Spleen (tissue), 13 donors: ENCODE measurements at regions of chr20 and their contacts with region 1.

Region 1: DNA sequence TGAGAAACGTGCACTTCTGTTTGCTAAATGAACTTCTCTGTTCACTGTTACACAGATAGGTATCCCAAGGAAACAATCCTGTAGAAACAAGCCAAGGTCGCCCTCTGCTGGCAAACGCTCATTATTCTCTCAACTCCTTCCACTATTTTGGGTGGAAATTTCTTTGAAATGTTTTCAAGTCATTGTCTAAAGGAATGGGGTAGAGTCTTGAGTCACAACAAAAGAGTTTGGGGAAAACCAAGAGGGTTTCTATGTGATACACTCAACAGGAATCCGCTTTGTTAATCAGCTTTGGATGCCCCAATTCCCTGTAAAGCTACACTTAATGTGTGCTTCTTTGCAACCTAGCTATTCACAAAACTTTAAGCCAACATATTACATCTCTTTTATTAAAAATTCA is 4.6 kb upstream of the RAE1 start:
- DNase-seq: peak; percentile 81
- H3K4me3 ChIP-seq: no peak overlapping the region
- H3K27ac ChIP-seq: no peak overlapping the region
- H3K4me1 ChIP-seq: peaks cover 0 to 7% (median 1%) of the 10 kb centered on the region in 6 donors
- H3K27me3 ChIP-seq: peaks cover 0 to 25% (median 0%) of the 10 kb centered on the region in 7 donors
- CTCF ChIP-seq: peak; percentile 11 to 77 (median 63)
- POLR2A ChIP-seq: no peak

Region 2: GRCh38 chr20:57089691-57090150 is 256.8 kb before region 1 on chr20:
- intact Hi-C with region 1: loop called (anchors 5 kb)
- DNase-seq: peak; percentile 86
- H3K4me3 ChIP-seq: no peak overlapping the region
- H3K27ac ChIP-seq: no peak overlapping the region
- H3K4me1 ChIP-seq: peaks cover 0 to 9% (median 4%) of the 10 kb centered on the region in 6 donors
- H3K27me3 ChIP-seq: peaks cover 0 to 70% (median 5%) of the 10 kb centered on the region in 7 donors
- CTCF ChIP-seq: peak; percentile 34 to 88 (median 78)
- POLR2A ChIP-seq: no peak

Region 3: GRCh38 chr20:57290749-57291402 is 55.6 kb before region 1 on chr20:
- intact Hi-C with region 1: no loop called
- DNase-seq: no peak
- H3K4me3 ChIP-seq: no peak overlapping the region
- H3K27ac ChIP-seq: no peak overlapping the region
- H3K4me1 ChIP-seq: no peaks in the 10 kb centered on the region
- H3K27me3 ChIP-seq: peaks cover 0 to 99% (median 4%) of the 10 kb centered on the region in 7 donors
- CTCF ChIP-seq: no peak
- POLR2A ChIP-seq: no peak